ENCODE measurements at regions of chrX and their contacts with region 1.

Region 1: GRCh38 chrX:8879750-8880149 is 78.6 kb upstream of the FAM9A start:
- DNase-seq: peak; percentile 9
- H3K4me3 ChIP-seq: no peak overlapping the region
- H3K27ac ChIP-seq: no peak overlapping the region
- H3K4me1 ChIP-seq: no peaks in the 10 kb centered on the region
- H3K27me3 ChIP-seq: no peaks in the 10 kb centered on the region
- CTCF ChIP-seq: peak; percentile 50 to 67
- POLR2A ChIP-seq: no peak

Region 2: GRCh38 chrX:7828594-7828993 is 1051.2 kb before region 1 on chrX:
- CTCF ChIA-PET with region 1: no interaction called
- POLR2A ChIA-PET with region 1: no interaction called
- dilution Hi-C with region 1: no loop called
- intact Hi-C with region 1: no loop called
- DNase-seq: no peak
- H3K4me3 ChIP-seq: no peak overlapping the region
- H3K27ac ChIP-seq: no peak overlapping the region
- H3K4me1 ChIP-seq: no peaks in the 10 kb centered on the region
- H3K27me3 ChIP-seq: no peaks in the 10 kb centered on the region
- CTCF ChIP-seq: no peak
- POLR2A ChIP-seq: no peak

Region 3: DNA sequence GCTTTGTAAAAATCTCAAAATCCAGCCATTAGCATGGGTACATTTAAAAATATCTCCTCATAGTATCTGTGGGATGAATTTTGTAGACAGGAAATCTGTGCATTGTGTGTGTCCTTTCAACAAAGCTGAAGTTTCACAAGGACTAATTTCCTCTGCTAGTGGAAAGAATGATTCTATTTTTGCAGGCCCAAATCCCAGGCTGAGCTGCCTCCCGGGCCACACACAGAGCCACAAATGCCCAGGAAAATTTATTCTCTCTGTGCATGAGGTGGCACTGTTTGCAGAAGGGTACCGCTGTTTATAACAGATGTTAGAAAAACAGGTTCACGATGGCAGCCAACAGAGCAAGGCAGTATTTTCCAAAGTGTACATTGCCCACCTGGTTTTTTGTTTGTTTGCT is 426.1 kb before region 1 on chrX:
- CTCF ChIA-PET with region 1: no interaction called
- POLR2A ChIA-PET with region 1: no interaction called
- dilution Hi-C with region 1: no loop called
- intact Hi-C with region 1: no loop called
- DNase-seq: no peak
- H3K4me3 ChIP-seq: no peak overlapping the region
- H3K27ac ChIP-seq: no peak overlapping the region
- H3K4me1 ChIP-seq: no peaks in the 10 kb centered on the region
- H3K27me3 ChIP-seq: no peaks in the 10 kb centered on the region
- CTCF ChIP-seq: no peak
- POLR2A ChIP-seq: no peak

Region 4: DNA sequence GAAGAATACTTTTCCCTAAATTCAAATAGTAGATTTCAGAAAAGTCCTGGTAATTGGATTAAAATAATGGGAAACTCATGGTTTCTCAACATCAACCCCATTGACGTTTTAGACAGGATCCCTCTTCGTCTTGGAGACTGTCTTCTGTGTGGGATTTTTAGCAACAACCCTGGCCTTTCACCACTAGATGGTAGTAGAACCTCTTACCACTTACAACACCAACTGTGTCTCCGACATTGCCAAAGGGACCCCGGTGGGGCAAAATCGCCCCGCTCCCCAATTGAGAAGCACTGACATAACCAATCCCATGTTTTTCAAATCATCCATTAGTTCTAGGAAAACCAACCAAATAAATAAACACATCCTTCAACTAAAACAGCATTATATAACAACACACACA is 130.9 kb before region 1 on chrX:
- CTCF ChIA-PET with region 1: interaction called, 3 read pairs
- POLR2A ChIA-PET with region 1: no interaction called
- dilution Hi-C with region 1: no loop called
- intact Hi-C with region 1: loop called (anchors 5 kb)
- DNase-seq: peak; percentile 22
- H3K4me3 ChIP-seq: no peak overlapping the region
- H3K27ac ChIP-seq: no peak overlapping the region
- H3K4me1 ChIP-seq: no peaks in the 10 kb centered on the region
- H3K27me3 ChIP-seq: peaks cover 0 to 5% of the 10 kb centered on the region in 2 experiments
- CTCF ChIP-seq: peak; percentile 35 to 36
- POLR2A ChIP-seq: no peak

Region 5: DNA sequence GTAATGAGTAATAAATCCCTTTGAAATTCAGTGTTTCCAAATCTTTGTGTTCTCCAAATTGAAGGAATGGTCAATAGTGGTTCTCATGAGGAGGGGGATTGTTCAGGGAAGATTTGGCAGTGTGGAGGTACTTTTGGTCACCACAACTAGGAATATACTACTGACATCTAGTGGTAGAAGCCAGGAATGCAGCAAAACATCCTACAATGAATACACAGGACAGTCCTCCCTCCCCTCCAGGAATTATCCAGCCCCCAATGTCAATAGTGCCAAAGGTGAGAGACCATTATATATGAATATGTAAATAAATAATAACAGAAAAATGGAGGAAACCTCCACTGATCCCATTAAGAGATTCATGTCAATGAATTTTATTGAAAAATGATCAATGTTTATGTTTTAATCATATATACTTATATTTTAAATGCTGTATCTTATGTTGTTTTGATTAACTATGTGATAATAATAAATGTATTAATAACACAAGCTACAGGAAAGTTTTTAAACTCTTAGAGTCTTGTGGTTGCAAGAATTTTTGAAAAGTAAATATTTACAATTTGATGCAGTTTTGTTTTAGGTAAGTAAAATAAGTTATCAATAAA is 64.2 kb before region 1 on chrX:
- CTCF ChIA-PET with region 1: interaction called, 4 read pairs
- POLR2A ChIA-PET with region 1: no interaction called
- dilution Hi-C with region 1: no loop called
- intact Hi-C with region 1: loop called (anchors 5 kb)
- DNase-seq: peak; percentile 36
- H3K4me3 ChIP-seq: no peak overlapping the region
- H3K27ac ChIP-seq: no peak overlapping the region
- H3K4me1 ChIP-seq: no peaks in the 10 kb centered on the region
- H3K27me3 ChIP-seq: no peaks in the 10 kb centered on the region
- CTCF ChIP-seq: peak; percentile 40 to 58
- POLR2A ChIP-seq: no peak

Region 6: DNA sequence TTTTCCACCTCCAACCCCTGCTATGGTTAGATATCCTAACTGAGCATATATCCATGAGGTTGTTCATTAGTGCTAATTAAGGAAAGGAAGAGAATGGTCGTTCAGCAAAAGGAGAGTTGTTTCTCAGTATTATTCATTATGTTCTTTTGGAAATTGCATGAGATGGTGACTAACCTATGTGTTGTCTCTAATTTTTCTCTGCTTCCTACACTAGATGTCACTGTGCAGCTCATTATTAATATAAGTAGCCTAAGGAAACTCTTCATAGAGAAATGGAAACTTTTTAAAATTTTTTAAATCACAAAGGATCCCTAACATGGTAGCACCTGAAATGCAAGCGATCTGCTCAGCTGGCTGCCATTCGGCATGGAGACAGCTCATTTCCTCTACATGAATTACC is 10.8 kb before region 1 on chrX:
- CTCF ChIA-PET with region 1: interaction called, 10 read pairs
- POLR2A ChIA-PET with region 1: no interaction called
- dilution Hi-C with region 1: no loop called
- intact Hi-C with region 1: no loop called
- DNase-seq: peak; percentile 3
- H3K4me3 ChIP-seq: no peak overlapping the region
- H3K27ac ChIP-seq: no peak overlapping the region
- H3K4me1 ChIP-seq: no peaks in the 10 kb centered on the region
- H3K27me3 ChIP-seq: no peaks in the 10 kb centered on the region
- CTCF ChIP-seq: no peak
- POLR2A ChIP-seq: no peak

Region 7: GRCh38 chrX:9327748-9328147 is 448.0 kb after region 1 on chrX:
- CTCF ChIA-PET with region 1: no interaction called
- POLR2A ChIA-PET with region 1: no interaction called
- dilution Hi-C with region 1: no loop called
- intact Hi-C with region 1: no loop called
- DNase-seq: no peak
- H3K4me3 ChIP-seq: no peak overlapping the region
- H3K27ac ChIP-seq: no peak overlapping the region
- H3K4me1 ChIP-seq: no peaks in the 10 kb centered on the region
- H3K27me3 ChIP-seq: no peaks in the 10 kb centered on the region
- CTCF ChIP-seq: no peak
- POLR2A ChIP-seq: no peak

Measured in endothelial cell of umbilical vein (primary cell).